Mammary epithelial cell (primary cell): ENCODE measurements at regions of chr11 and their contacts with region 1.

Region 1: DNA sequence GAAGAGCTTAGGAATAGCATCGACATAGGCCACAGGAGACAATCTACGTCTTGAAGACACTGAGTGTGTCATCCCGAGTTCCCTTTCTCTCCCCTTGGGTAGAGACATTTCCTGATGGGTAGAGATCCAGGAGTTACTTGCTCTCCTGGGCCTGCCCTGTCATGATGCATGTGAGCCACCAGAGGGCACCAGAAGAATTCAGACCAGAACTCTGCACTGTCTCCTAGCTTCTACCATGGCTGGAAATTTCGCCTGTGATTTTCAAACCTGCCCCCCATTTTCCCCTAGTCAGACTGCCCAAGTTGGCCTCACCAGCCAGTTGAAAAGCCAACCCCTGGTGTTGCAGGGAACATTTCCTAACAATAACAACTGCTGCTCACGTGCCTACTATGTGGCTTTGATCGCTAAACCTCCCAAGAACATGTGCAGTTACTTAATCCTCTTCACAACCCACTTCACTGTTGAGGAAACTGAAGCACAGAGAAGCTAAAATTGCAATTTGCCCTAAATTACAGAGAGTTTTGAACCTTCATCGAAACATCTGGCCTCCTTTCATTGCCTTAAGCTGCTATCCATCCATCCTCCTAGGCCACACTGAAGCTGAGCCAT is 47.2 kb downstream of the C11orf58 start:
- DNase-seq: peak; percentile 61
- H3K4me3 ChIP-seq: no peak overlapping the region
- H3K27ac ChIP-seq: no peak overlapping the region
- H3K4me1 ChIP-seq: peaks cover 46% of the 10 kb centered on the region
- H3K27me3 ChIP-seq: no peaks in the 10 kb centered on the region
- CTCF ChIP-seq: peak; percentile 93 to 96

Region 2: DNA sequence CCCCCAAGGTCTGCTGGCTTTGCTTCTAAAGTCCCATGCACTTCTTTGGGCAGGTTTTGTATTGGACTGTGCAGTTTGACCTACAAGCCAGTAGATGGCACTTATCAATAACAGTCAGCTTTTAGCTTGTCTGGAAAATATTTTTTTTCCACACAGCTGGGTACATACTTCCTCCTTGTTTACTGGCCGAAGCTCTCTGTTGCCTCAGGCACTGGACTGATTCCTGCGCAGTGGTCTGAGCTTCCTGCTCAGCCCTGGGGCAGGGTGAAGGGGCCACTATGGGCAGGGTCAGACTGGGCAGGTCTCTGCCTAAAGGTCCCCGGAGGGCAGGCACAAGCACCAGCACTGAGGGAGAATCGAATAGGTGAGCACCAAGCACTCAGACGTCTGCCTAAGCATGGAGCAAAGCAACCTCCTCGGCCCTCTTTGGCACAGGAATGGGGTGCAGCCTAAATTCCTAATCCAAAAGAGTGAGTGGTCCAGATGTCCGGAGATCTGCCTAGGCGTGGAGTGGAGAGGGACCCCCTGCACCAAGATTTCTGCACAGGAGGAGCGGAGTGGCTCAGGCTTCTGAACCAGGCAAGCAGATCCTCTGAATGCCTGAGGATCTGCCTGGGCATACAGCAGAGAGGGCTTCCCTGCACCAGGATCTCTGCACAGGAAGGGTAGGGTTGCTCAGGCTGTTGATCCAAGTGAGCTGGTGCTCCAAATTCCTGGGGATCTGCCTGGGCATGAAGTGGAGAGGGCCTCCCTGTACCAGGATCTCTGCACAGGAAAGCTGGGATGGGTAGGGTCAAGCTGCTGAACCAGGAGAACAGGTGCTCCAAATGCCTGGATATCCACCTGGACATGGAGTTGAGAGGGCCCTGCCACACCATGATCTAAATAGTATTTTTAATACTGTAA is 153.1 kb before region 1 on chr11:
- CTCF ChIA-PET with region 1: no interaction called
- dilution Hi-C with region 1: no loop called
- in situ Hi-C with region 1: no loop called
- intact Hi-C with region 1: loop called (anchors 1 kb)
- DNase-seq: peak; percentile 43
- H3K4me3 ChIP-seq: no peak overlapping the region
- H3K27ac ChIP-seq: no peak overlapping the region
- H3K4me1 ChIP-seq: peaks cover 9% of the 10 kb centered on the region
- H3K27me3 ChIP-seq: no peaks in the 10 kb centered on the region
- CTCF ChIP-seq: peak; percentile 54 to 58

Region 3: GRCh38 chr11:16820324-16821092 is 34.9 kb after region 1 on chr11:
- CTCF ChIA-PET with region 1: interaction called, 4 read pairs
- dilution Hi-C with region 1: no loop called
- in situ Hi-C with region 1: no loop called
- intact Hi-C with region 1: loop called (anchors 2 kb)
- DNase-seq: peak; percentile 75
- H3K4me3 ChIP-seq: no peak overlapping the region
- H3K27ac ChIP-seq: no peak overlapping the region
- H3K4me1 ChIP-seq: peaks cover 15% of the 10 kb centered on the region
- H3K27me3 ChIP-seq: no peaks in the 10 kb centered on the region
- CTCF ChIP-seq: peak; percentile 76 to 91

Region 4: DNA sequence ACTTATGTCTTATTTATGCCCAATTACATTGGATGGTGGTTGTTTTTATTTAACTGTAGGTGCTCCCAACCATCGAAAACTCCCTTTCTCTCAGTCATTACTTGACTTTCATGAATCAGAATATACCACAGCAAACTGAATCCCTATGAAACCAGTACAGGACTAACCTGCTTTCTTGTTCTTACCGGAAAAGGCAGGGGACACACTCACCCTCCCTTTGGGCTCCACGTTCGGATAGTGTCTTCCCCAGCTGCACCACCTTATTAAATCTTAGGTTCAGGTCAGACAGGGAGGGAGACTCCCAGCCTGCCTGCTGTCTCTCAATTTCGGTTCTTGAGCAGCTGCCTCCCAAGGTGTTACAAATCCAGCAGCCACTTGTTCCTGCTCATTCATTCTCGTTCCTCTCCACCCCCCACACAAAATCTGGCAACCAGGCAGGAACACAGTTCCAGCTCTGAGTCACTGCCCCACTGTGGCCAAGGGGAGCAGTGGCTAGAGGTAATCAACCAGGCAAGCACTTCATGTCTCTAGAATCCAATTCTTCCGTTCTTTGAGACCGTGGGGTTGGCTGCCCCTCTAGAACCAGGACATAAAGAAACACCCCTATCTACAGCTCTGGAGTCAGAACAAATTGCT is 95.6 kb after region 1 on chr11:
- CTCF ChIA-PET with region 1: interaction called, 5 read pairs
- dilution Hi-C with region 1: no loop called
- in situ Hi-C with region 1: no loop called
- intact Hi-C with region 1: loop called (anchors 1 kb)
- DNase-seq: peak; percentile 89
- H3K4me3 ChIP-seq: no peak overlapping the region
- H3K27ac ChIP-seq: peak overlapping the region; percentile 58
- H3K4me1 ChIP-seq: peaks cover 60% of the 10 kb centered on the region
- H3K27me3 ChIP-seq: no peaks in the 10 kb centered on the region
- CTCF ChIP-seq: peak; percentile 38 to 68

Region 5: DNA sequence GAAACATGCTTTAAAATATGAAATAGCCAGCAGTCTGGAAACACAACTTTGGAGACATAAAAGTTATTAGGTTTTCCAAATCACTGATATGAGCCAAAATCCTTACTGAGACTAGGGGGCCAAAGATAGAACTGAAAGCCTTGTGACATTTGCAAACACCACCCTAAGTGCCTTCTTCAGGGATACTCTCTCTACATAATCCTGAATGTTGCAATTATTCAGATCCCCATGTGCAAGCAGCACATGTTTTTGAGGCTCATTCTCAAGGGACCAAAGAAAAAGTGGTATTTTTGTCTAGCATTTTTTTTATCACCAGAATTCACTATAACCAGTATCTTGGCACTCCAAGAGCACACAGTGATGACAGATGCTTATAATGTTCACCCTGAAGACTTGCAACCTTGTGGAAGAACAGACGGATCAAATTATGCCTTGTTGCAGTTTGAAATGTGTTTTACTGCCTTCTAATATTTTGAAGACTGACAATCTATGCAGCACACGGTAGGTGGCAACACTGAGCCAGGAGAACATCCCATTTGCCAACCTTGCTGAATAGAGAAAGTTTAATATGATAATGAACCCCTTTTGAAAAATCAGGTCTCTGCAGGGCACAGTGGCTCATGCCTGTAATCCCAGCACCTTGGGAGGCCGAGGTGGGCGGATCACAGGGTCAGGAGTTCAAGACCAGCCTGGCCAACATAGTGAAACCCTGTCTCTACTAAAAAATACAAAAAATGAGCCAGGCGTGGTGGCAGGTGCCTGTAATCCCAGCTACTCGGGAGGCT is 150.1 kb after region 1 on chr11:
- CTCF ChIA-PET with region 1: no interaction called
- dilution Hi-C with region 1: no loop called
- in situ Hi-C with region 1: no loop called
- intact Hi-C with region 1: loop called (anchors 1 kb)
- DNase-seq: peak; percentile 45
- H3K4me3 ChIP-seq: no peak overlapping the region
- H3K27ac ChIP-seq: no peak overlapping the region
- H3K4me1 ChIP-seq: no peaks in the 10 kb centered on the region
- H3K27me3 ChIP-seq: no peaks in the 10 kb centered on the region
- CTCF ChIP-seq: peak; percentile 80 to 85

Region 6: GRCh38 chr11:17504330-17505107 is 718.9 kb after region 1 on chr11:
- CTCF ChIA-PET with region 1: no interaction called
- dilution Hi-C with region 1: no loop called
- in situ Hi-C with region 1: no loop called
- intact Hi-C with region 1: loop called (anchors 5 kb)
- DNase-seq: peak; percentile 48
- H3K4me3 ChIP-seq: no peak overlapping the region
- H3K27ac ChIP-seq: no peak overlapping the region
- H3K4me1 ChIP-seq: no peaks in the 10 kb centered on the region
- H3K27me3 ChIP-seq: no peaks in the 10 kb centered on the region
- CTCF ChIP-seq: peak; percentile 93 to 96

Region 7: GRCh38 chr11:17528181-17528691 is 742.6 kb after region 1 on chr11:
- CTCF ChIA-PET with region 1: no interaction called
- dilution Hi-C with region 1: no loop called
- in situ Hi-C with region 1: no loop called
- intact Hi-C with region 1: loop called (anchors 5 kb)
- DNase-seq: peak; percentile 24
- H3K4me3 ChIP-seq: no peak overlapping the region
- H3K27ac ChIP-seq: no peak overlapping the region
- H3K4me1 ChIP-seq: no peaks in the 10 kb centered on the region
- H3K27me3 ChIP-seq: no peaks in the 10 kb centered on the region
- CTCF ChIP-seq: peak; percentile 69 to 84